ENCODE measurements at regions of chr7 and their contacts with region 1.

Region 1: GRCh38 chr7:124784879-124785818 is 19.6 kb upstream of the GPR37 start:
- DNase-seq: peak in 9 of 10 donors; percentile 31 to 94 (median 65)

Region 2: GRCh38 chr7:124171068-124171467 is 614.1 kb before region 1 on chr7:
- intact Hi-C with region 1: loop called (anchors 5 kb)
- DNase-seq: peak in 8 of 10 donors; percentile 10 to 90 (median 63)